ENCODE measurements at regions of chr9 and their contacts with region 1.

Region 1: GRCh38 chr9:2302606-2303005 is 287.5 kb downstream of the SMARCA2 start:
- DNase-seq: peak in 1 of 2 experiments; percentile 1
- H3K4me3 ChIP-seq: no peak overlapping the region
- H3K27ac ChIP-seq: no peak overlapping the region
- H3K4me1 ChIP-seq: no peaks in the 10 kb centered on the region
- H3K27me3 ChIP-seq: no peaks in the 10 kb centered on the region
- CTCF ChIP-seq: no peak
- EP300 ChIP-seq: no peak
- POLR2A ChIP-seq: no peak
- RAD21 ChIP-seq: no peak

Region 2: GRCh38 chr9:2289263-2289662 is 13.3 kb before region 1 on chr9:
- CTCF ChIA-PET with region 1: interaction called, 10 read pairs
- POLR2A ChIA-PET with region 1: no interaction called
- DNase-seq: no peak
- H3K4me3 ChIP-seq: no peak overlapping the region
- H3K27ac ChIP-seq: no peak overlapping the region
- H3K4me1 ChIP-seq: peaks cover 0 to 13% (median 7%) of the 10 kb centered on the region in 4 experiments; a peak in 2 of 7 replicates
- H3K27me3 ChIP-seq: no peaks in the 10 kb centered on the region
- CTCF ChIP-seq: no peak
- EP300 ChIP-seq: no peak
- POLR2A ChIP-seq: no peak
- RAD21 ChIP-seq: no peak

Region 3: GRCh38 chr9:2324742-2325141 is 22.1 kb after region 1 on chr9:
- CTCF ChIA-PET with region 1: no interaction called
- POLR2A ChIA-PET with region 1: no interaction called
- DNase-seq: no peak
- H3K4me3 ChIP-seq: no peak overlapping the region
- H3K27ac ChIP-seq: no peak overlapping the region
- H3K4me1 ChIP-seq: no peaks in the 10 kb centered on the region
- H3K27me3 ChIP-seq: no peaks in the 10 kb centered on the region
- CTCF ChIP-seq: no peak
- EP300 ChIP-seq: no peak
- POLR2A ChIP-seq: no peak
- RAD21 ChIP-seq: no peak

Region 4: DNA sequence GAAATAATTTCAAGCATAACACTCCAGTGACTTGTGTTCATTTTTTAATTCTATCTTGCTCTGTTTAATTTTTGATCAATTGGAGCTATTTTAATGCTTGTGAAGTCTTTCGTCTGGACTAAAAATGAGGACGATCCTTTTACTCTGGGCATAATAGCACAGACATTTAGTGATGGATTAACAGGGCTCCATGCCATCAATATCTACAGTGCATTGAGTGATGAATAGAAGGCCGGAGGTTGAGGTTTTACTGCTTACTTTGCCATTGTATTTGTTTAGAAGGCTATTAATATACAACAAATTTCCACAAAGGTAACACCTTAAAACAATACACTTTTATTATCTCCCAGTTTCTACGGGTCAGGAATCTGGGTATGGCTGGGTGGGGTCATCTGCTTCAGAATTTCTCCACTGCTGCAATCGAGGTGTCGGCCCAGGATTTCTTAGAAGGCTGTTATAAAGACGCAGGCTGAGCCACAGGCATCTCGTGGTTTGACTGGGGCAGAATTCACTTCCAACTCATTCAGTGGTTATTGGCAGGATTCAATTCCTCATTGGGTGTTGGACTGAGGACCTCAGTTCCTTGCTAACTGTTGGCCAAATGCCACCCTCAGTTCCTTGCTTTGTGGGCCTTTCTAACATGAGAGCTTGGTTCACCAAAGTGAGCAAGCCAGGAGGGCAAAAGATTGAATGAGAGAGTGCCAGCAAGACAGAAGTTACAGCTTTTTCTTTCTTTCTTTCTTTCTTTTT is 53.6 kb after region 1 on chr9:
- CTCF ChIA-PET with region 1: no interaction called
- POLR2A ChIA-PET with region 1: no interaction called
- DNase-seq: no peak
- H3K4me3 ChIP-seq: no peak overlapping the region
- H3K27ac ChIP-seq: no peak overlapping the region
- H3K4me1 ChIP-seq: peaks cover 0 to 12% (median 5%) of the 10 kb centered on the region in 4 experiments; a peak in 4 of 7 replicates
- H3K27me3 ChIP-seq: no peaks in the 10 kb centered on the region
- CTCF ChIP-seq: no peak
- EP300 ChIP-seq: no peak
- POLR2A ChIP-seq: no peak
- RAD21 ChIP-seq: no peak

Measured in H1 (cell line).